Activated naive CD4-positive, alpha-beta T cell treated with anti-CD3 and anti-CD28 coated beads for 36 hours (primary cell): ENCODE measurements at regions of chr12 and their contacts with region 1.

Region 1: GRCh38 chr12:22100958-22101748 is 55.1 kb downstream of the CMAS start:
- DNase-seq: peak; percentile 76
- H3K4me3 Mint-ChIP-seq: no peak overlapping the region
- H3K27ac Mint-ChIP-seq: no peak overlapping the region
- H3K4me1 Mint-ChIP-seq: peaks cover 14% of the 10 kb centered on the region
- H3K27me3 Mint-ChIP-seq: no peaks in the 10 kb centered on the region

Region 2: GRCh38 chr12:21710948-21711775 is 390.0 kb before region 1 on chr12:
- CTCF ChIA-PET with region 1: no interaction called
- intact Hi-C with region 1: no loop called
- DNase-seq: no peak
- H3K4me3 Mint-ChIP-seq: no peak overlapping the region
- H3K27ac Mint-ChIP-seq: no peak overlapping the region
- H3K4me1 Mint-ChIP-seq: no peaks in the 10 kb centered on the region
- H3K27me3 Mint-ChIP-seq: peaks cover 6% of the 10 kb centered on the region

Region 3: GRCh38 chr12:22083167-22083566 is 18.0 kb before region 1 on chr12:
- CTCF ChIA-PET with region 1: interaction called, 3 read pairs
- intact Hi-C with region 1: loop called (anchors 1 kb)
- DNase-seq: peak; percentile 43
- H3K4me3 Mint-ChIP-seq: no peak overlapping the region
- H3K27ac Mint-ChIP-seq: no peak overlapping the region
- H3K4me1 Mint-ChIP-seq: no peaks in the 10 kb centered on the region
- H3K27me3 Mint-ChIP-seq: no peaks in the 10 kb centered on the region

Region 4: GRCh38 chr12:22173177-22173576 is 72.0 kb after region 1 on chr12:
- CTCF ChIA-PET with region 1: interaction called, 10 read pairs
- intact Hi-C with region 1: loop called (anchors 1 kb)
- DNase-seq: no peak
- H3K4me3 Mint-ChIP-seq: no peak overlapping the region
- H3K27ac Mint-ChIP-seq: no peak overlapping the region
- H3K4me1 Mint-ChIP-seq: peaks cover 4% of the 10 kb centered on the region
- H3K27me3 Mint-ChIP-seq: no peaks in the 10 kb centered on the region

Region 5: DNA sequence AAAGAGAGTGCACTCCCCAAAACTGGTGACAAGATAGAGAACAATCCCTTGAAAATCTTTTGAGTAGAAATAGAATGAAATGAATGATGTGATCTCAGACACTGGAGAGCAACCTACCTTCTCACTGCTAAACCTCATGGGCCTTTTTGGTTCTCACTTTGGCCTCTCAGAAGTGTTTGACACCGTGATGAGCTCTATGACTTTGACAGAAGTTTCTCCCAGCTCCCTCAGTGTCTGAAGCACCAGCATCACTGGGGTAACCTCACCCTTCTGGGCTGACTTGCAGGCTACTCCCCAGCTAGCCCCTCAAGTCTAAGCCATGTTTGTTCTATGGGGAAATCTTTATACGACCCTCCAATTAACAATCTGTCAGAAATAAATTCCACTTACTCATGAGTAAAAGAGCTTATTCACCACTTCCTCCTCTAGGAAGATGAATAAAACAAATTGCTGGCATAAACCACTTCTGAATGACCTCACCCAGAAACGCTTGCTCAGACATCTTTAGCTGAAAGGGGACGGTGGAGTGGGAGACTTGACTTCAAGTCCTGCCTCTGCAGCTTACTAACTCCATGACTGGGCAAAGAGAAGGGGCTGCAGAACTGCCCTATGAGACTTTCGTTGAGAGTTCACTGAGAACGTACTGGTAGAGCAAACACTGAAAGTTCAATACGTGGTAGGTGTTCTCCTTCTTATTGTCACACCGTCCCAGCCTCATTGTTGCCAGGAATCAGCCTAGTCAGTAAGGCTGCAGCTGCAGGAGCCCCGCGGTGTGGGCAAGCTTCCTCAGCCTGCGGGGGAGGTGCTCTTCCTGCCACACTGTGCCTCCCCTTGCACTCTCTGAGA is 186.8 kb after region 1 on chr12:
- CTCF ChIA-PET with region 1: interaction called, 3 read pairs
- intact Hi-C with region 1: loop called (anchors 5 kb)
- DNase-seq: peak; percentile 50
- H3K4me3 Mint-ChIP-seq: peak overlapping the region; percentile 45
- H3K27ac Mint-ChIP-seq: peak overlapping the region; percentile 47
- H3K4me1 Mint-ChIP-seq: peaks cover 22% of the 10 kb centered on the region
- H3K27me3 Mint-ChIP-seq: no peaks in the 10 kb centered on the region

Region 6: GRCh38 chr12:22459838-22460490 is 358.8 kb after region 1 on chr12:
- CTCF ChIA-PET with region 1: interaction called, 14 read pairs
- intact Hi-C with region 1: no loop called
- DNase-seq: no peak
- H3K4me3 Mint-ChIP-seq: no peak overlapping the region
- H3K27ac Mint-ChIP-seq: no peak overlapping the region
- H3K4me1 Mint-ChIP-seq: peaks cover 3% of the 10 kb centered on the region
- H3K27me3 Mint-ChIP-seq: no peaks in the 10 kb centered on the region

Region 7: DNA sequence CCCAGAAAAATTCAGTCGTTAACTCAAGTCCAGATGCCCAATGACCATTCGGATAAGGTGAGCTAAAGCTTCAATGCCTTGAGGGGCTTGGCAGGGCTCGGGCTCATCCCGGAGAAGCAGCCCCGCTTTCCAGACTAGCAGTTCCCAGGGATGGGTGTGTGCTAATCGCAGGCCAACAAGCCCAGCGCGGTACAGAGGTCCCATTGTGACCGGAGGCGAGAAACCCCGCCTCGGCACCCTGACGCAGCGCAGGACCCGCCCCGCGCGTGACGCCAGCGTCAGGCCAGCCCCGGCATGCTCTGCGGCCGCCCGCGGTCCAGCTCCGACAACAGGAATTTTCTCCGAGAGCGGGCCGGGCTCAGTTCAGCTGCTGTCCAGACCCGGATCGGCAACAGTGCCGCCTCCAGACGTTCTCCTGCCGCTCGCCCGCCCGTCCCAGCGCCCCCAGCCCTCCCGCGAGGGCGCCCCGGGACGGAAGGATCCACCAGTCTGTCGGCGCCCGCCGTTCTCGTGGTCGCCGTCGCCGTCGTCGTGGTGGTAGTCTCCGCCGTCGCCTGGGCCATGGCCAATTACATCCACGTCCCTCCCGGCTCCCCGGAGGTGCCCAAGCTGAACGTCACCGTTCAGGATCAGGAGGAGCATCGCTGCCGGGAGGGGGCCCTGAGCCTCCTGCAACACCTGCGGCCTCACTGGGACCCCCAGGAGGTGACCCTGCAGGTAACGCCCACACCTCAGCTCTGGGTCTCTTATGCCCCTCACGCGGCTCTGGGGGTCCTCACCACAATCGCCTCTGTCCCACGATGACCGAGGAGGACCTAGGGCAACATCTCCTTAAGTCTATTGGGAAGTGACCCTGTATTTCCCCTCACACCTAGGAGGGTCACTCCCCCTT is 524.0 kb after region 1 on chr12 and contains the start of gene ETNK1:
- CTCF ChIA-PET with region 1: no interaction called
- intact Hi-C with region 1: loop called (anchors 10 kb)
- DNase-seq: peak; percentile 87
- H3K4me3 Mint-ChIP-seq: peak within 1 kb of the TSS; percentile 93
- H3K27ac Mint-ChIP-seq: peak within 1 kb of the TSS; percentile 90
- H3K4me1 Mint-ChIP-seq: peaks cover 28% of the 10 kb centered on the region
- H3K27me3 Mint-ChIP-seq: no peaks in the 10 kb centered on the region
- total RNA-seq, gene ETNK1: 35.9 to 39.4 TPM